Activated T-helper 1 cell treated with anti-CD3 and anti-CD28 coated beads, Interleukin-12 subunit alpha, Interleukin-12 subunit beta, Interleukin-2, Interleukin-4 antibody, amounts not matched to agents 30 ng/mL and 10 ng/mL and 1 ng/mL, durations not matched to agents 14 hours and 24 hours and 36 hours (primary cell): ENCODE measurements at regions of chr2 and their contacts with region 1.

Region 1: DNA sequence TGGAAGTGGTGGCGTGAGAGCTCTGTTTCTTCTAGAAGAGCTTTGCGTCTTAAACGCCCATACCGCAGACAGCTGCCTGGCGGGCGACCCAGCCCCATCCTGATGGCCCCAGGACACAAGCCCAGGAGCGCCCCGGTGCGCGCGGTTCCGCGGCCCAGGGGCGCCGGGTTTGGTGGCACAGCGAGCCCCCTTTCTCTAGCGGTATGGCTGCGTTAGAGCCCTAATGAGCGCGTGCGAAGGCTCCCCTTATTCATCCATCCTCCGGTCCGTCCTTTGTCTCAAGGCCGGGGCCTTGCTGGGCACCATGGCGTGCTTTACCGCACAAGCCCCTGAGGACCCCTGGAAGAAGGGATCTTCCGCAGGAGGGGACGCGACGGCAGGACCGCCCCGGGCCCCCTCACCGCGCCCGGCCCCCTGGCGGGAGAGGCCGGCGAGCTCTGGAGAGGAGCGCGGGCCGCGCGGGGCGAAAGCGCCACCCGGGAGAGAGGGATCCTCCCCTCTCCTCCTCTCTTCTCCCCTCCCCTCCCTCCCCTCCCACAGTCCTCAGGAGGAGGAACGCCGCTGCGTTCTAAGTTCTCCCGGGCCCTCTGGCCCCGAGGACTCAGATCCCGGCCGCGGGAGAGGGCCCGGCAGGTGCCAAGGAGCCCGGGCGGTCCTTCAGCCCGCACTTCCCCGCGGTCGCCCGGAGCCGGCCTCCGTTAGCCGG is 626 bp upstream of the SLC1A4 start:
- DNase-seq: peak; percentile 75
- H3K4me3 Mint-ChIP-seq: peak overlapping the region; percentile 88
- H3K27ac Mint-ChIP-seq: peak overlapping the region; percentile 92
- H3K4me1 Mint-ChIP-seq: peaks cover 79% of the 10 kb centered on the region
- H3K27me3 Mint-ChIP-seq: peaks cover 11% of the 10 kb centered on the region

Region 2: GRCh38 chr2:64144057-64145013 is 844.2 kb before region 1 on chr2 and contains the start of gene PELI1:
- intact Hi-C with region 1: loop called (anchors 10 kb)
- DNase-seq: peak; percentile 90
- H3K4me3 Mint-ChIP-seq: peak within 1 kb of the TSS; percentile 98
- H3K27ac Mint-ChIP-seq: peak within 1 kb of the TSS; percentile 97
- H3K4me1 Mint-ChIP-seq: peaks cover 28% of the 10 kb centered on the region
- H3K27me3 Mint-ChIP-seq: peaks cover 3% of the 10 kb centered on the region
- total RNA-seq, gene PELI1: 47.1 and 50.4 TPM in 2 replicates

Region 3: GRCh38 chr2:64904413-64905329 is 83.9 kb before region 1 on chr2:
- intact Hi-C with region 1: no loop called
- DNase-seq: no peak
- H3K4me3 Mint-ChIP-seq: no peak overlapping the region
- H3K27ac Mint-ChIP-seq: no peak overlapping the region
- H3K4me1 Mint-ChIP-seq: peaks cover 13% of the 10 kb centered on the region
- H3K27me3 Mint-ChIP-seq: peaks cover 23% of the 10 kb centered on the region

Region 4: GRCh38 chr2:65040400-65041261 is 52.1 kb after region 1 on chr2:
- intact Hi-C with region 1: loop called (anchors 1 kb)
- DNase-seq: peak; percentile 67
- H3K4me3 Mint-ChIP-seq: no peak overlapping the region
- H3K27ac Mint-ChIP-seq: no peak overlapping the region
- H3K4me1 Mint-ChIP-seq: peaks cover 25% of the 10 kb centered on the region
- H3K27me3 Mint-ChIP-seq: no peaks in the 10 kb centered on the region

Region 5: GRCh38 chr2:65227425-65228262 is 239.1 kb after region 1 on chr2 and contains the start of gene ACTR2:
- intact Hi-C with region 1: loop called (anchors 1 kb)
- DNase-seq: peak; percentile 95
- H3K4me3 Mint-ChIP-seq: peak within 1 kb of the TSS; percentile 98
- H3K27ac Mint-ChIP-seq: peak within 1 kb of the TSS; percentile 99
- H3K4me1 Mint-ChIP-seq: peaks cover 36% of the 10 kb centered on the region
- H3K27me3 Mint-ChIP-seq: no peaks in the 10 kb centered on the region
- total RNA-seq, gene ACTR2: 285 and 295 TPM in 2 replicates